ENCODE measurements at regions of chr5 and their contacts with region 1.

Region 1: DNA sequence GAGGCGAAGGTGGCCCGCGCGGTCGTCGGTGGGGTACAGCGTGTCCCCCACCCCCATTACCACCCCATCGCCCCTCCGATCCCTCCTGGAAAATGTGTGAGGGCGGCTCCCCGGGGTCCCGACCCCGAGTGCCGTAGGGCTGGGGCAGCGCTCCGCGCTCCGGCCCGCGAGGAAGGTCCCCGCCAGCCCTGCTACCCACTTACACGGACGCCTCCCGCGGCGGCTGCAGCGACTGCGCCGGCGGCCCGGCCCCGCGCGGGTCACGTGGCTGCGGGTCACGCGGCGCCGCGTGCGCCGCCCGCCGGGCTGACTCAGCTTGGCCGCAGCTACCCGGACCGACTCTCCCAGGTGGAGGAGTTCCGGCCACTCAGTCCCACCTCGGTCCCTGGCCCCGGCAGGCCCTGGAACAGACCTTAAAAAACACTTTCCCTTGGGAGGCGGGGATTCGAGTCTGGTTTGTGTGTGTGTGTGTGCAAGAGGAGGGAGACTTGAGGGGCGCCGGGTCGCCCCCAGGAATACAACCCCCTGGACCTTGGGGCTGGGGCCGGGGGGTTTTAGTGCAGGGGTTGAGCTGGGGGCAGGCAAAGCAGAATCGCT is at the start of gene GNPDA1:
- DNase-seq: peak; percentile 64 to 78 (median 66)
- H3K4me3 ChIP-seq: peak within 1 kb of the TSS; percentile 82
- H3K4me3 Mint-ChIP-seq: peak within 1 kb of the TSS; percentile 83 to 94 (median 89)
- H3K27ac ChIP-seq: peak within 1 kb of the TSS; percentile 67
- H3K27ac Mint-ChIP-seq: peak within 1 kb of the TSS; percentile 88 to 97 (median 92)
- H3K4me1 ChIP-seq: peaks cover 62% of the 10 kb centered on the region
- H3K4me1 Mint-ChIP-seq: peaks cover 55 to 73% (median 63%) of the 10 kb centered on the region in 3 donors
- H3K27me3 ChIP-seq: no peaks in the 10 kb centered on the region
- H3K27me3 Mint-ChIP-seq: no peaks in the 10 kb centered on the region
- total RNA-seq, gene GNPDA1: 62.4 to 70.0 TPM

Region 2: GRCh38 chr5:141992349-141992963 is 20.4 kb before region 1 on chr5:
- CTCF ChIA-PET with region 1: interaction called, 28 read pairs
- POLR2A ChIA-PET with region 1: interaction called, 3 read pairs
- DNase-seq: peak; percentile 53 to 80 (median 68)
- H3K4me3 ChIP-seq: no peak overlapping the region
- H3K4me3 Mint-ChIP-seq: no peak overlapping the region
- H3K27ac ChIP-seq: no peak overlapping the region
- H3K27ac Mint-ChIP-seq: peak overlapping the region in 2 of 8 donors; percentile 0 to 11
- H3K4me1 ChIP-seq: peaks cover 9% of the 10 kb centered on the region
- H3K4me1 Mint-ChIP-seq: peaks cover 3 to 14% (median 5%) of the 10 kb centered on the region in 3 donors
- H3K27me3 ChIP-seq: no peaks in the 10 kb centered on the region
- H3K27me3 Mint-ChIP-seq: peaks cover 0 to 1% of the 10 kb centered on the region in 2 donors

Region 3: GRCh38 chr5:142095651-142096330 is 82.9 kb after region 1 on chr5:
- CTCF ChIA-PET with region 1: interaction called, 13 read pairs
- POLR2A ChIA-PET with region 1: no interaction called
- DNase-seq: peak; percentile 55 to 94 (median 85)
- H3K4me3 ChIP-seq: peak overlapping the region; percentile 50
- H3K4me3 Mint-ChIP-seq: peak overlapping the region in 6 of 7 donors; percentile 33 to 67 (median 60)
- H3K27ac ChIP-seq: peak overlapping the region; percentile 47
- H3K27ac Mint-ChIP-seq: peak overlapping the region; percentile 81 to 96 (median 93)
- H3K4me1 ChIP-seq: peaks cover 52% of the 10 kb centered on the region
- H3K4me1 Mint-ChIP-seq: peaks cover 31 to 49% (median 37%) of the 10 kb centered on the region in 3 donors
- H3K27me3 ChIP-seq: no peaks in the 10 kb centered on the region
- H3K27me3 Mint-ChIP-seq: no peaks in the 10 kb centered on the region

Region 4: GRCh38 chr5:142108432-142109330 is 95.8 kb after region 1 on chr5 and contains the start of gene NDFIP1:
- CTCF ChIA-PET with region 1: interaction called, 50 read pairs
- POLR2A ChIA-PET with region 1: interaction called, 15 read pairs
- DNase-seq: peak; percentile 77 to 91 (median 86)
- H3K4me3 ChIP-seq: peak within 1 kb of the TSS; percentile 89
- H3K4me3 Mint-ChIP-seq: peak within 1 kb of the TSS; percentile 91 to 99 (median 94)
- H3K27ac ChIP-seq: peak within 1 kb of the TSS; percentile 88
- H3K27ac Mint-ChIP-seq: peak within 1 kb of the TSS; percentile 91 to 99 (median 98)
- H3K4me1 ChIP-seq: peaks cover 79% of the 10 kb centered on the region
- H3K4me1 Mint-ChIP-seq: peaks cover 62 to 71% (median 71%) of the 10 kb centered on the region in 3 donors
- H3K27me3 ChIP-seq: no peaks in the 10 kb centered on the region
- H3K27me3 Mint-ChIP-seq: no peaks in the 10 kb centered on the region
- total RNA-seq, gene NDFIP1: 81.3 to 84.4 TPM

Region 5: GRCh38 chr5:142145106-142145900 is 132.4 kb after region 1 on chr5:
- CTCF ChIA-PET with region 1: interaction called, 102 read pairs
- POLR2A ChIA-PET with region 1: interaction called, 3 read pairs
- DNase-seq: peak; percentile 17 to 70 (median 35)
- H3K4me3 ChIP-seq: no peak overlapping the region
- H3K4me3 Mint-ChIP-seq: no peak overlapping the region
- H3K27ac ChIP-seq: no peak overlapping the region
- H3K27ac Mint-ChIP-seq: peak overlapping the region in 1 of 8 donors; percentile 42
- H3K4me1 ChIP-seq: no peaks in the 10 kb centered on the region
- H3K4me1 Mint-ChIP-seq: peaks cover 0 to 4% (median 0%) of the 10 kb centered on the region in 3 donors
- H3K27me3 ChIP-seq: no peaks in the 10 kb centered on the region
- H3K27me3 Mint-ChIP-seq: no peaks in the 10 kb centered on the region

Region 6: GRCh38 chr5:142263346-142263745 is 250.5 kb after region 1 on chr5:
- CTCF ChIA-PET with region 1: no interaction called
- POLR2A ChIA-PET with region 1: no interaction called
- DNase-seq: no peak
- H3K4me3 ChIP-seq: no peak overlapping the region
- H3K4me3 Mint-ChIP-seq: no peak overlapping the region
- H3K27ac ChIP-seq: no peak overlapping the region
- H3K27ac Mint-ChIP-seq: peak overlapping the region in 1 of 8 donors; percentile 3
- H3K4me1 ChIP-seq: no peaks in the 10 kb centered on the region
- H3K4me1 Mint-ChIP-seq: peaks cover 0 to 5% (median 0%) of the 10 kb centered on the region in 3 donors
- H3K27me3 ChIP-seq: no peaks in the 10 kb centered on the region
- H3K27me3 Mint-ChIP-seq: peaks cover 2 to 5% of the 10 kb centered on the region in 2 donors

Region 7: DNA sequence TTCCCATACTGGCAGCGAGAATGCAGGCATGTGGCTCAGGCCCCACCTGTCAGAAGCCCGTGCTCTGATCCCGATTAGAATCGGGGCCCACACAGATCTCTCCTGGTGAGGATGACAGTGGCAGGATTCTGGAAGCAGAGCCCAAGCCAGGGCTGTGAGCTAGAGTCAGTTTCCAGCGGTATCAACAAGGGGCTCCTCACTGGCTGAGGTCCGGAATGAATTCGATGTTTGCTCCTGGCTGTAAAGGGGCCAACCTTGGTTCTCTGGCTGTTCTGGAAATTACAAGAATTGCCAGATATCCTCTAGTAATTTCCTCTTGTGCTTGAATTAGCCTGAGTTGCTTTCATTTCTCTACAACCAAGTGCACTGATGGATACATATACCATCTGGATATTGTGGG is 441.0 kb after region 1 on chr5:
- CTCF ChIA-PET with region 1: no interaction called
- POLR2A ChIA-PET with region 1: no interaction called
- DNase-seq: no peak
- H3K4me3 ChIP-seq: no peak overlapping the region
- H3K4me3 Mint-ChIP-seq: no peak overlapping the region
- H3K27ac ChIP-seq: no peak overlapping the region
- H3K27ac Mint-ChIP-seq: no peak overlapping the region
- H3K4me1 ChIP-seq: no peaks in the 10 kb centered on the region
- H3K4me1 Mint-ChIP-seq: peaks cover 9 to 16% (median 14%) of the 10 kb centered on the region in 3 donors
- H3K27me3 ChIP-seq: no peaks in the 10 kb centered on the region
- H3K27me3 Mint-ChIP-seq: peaks cover 2 to 16% of the 10 kb centered on the region in 2 donors

Measured in CD8-positive, alpha-beta memory T cell (primary cell).